ENCODE measurements at regions of chr16 and their contacts with region 1.

Region 1: DNA sequence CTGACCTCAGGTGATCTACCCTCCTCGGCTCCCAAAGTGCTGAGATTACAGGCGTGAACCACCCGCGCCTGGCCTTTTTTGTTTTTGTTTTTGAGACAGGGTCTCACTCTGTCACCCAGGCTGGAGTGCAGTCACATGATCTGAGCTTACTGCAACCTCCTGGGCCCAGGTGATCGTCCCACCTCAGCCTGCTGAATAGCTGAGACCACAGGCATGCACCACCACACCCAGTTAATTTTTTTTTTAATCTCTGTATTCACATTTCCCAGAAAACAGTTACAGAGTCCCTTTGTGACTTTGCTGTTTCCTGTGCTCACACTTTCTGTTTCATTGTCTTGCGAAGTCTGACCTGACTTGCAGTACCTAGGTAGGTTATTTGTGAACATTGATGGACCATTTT is 2.7 kb downstream of the CLUAP1 start:
- DNase-seq: peak; percentile 65
- H3K4me3 Mint-ChIP-seq: peak overlapping the region; percentile 77
- H3K27ac Mint-ChIP-seq: peak overlapping the region; percentile 90
- H3K4me1 Mint-ChIP-seq: peaks cover 68% of the 10 kb centered on the region
- H3K27me3 Mint-ChIP-seq: peaks cover 3% of the 10 kb centered on the region

Region 2: GRCh38 chr16:3282730-3283524 is 220.6 kb before region 1 on chr16 and contains the start of gene ZNF263:
- intact Hi-C with region 1: loop called (anchors 1 kb)
- DNase-seq: peak; percentile 90
- H3K4me3 Mint-ChIP-seq: peak within 1 kb of the TSS; percentile 96
- H3K27ac Mint-ChIP-seq: peak within 1 kb of the TSS; percentile 97
- H3K4me1 Mint-ChIP-seq: peaks cover 23% of the 10 kb centered on the region
- H3K27me3 Mint-ChIP-seq: no peaks in the 10 kb centered on the region
- total RNA-seq, gene ZNF263: 25.5 and 27.8 TPM in 2 replicates

Region 3: DNA sequence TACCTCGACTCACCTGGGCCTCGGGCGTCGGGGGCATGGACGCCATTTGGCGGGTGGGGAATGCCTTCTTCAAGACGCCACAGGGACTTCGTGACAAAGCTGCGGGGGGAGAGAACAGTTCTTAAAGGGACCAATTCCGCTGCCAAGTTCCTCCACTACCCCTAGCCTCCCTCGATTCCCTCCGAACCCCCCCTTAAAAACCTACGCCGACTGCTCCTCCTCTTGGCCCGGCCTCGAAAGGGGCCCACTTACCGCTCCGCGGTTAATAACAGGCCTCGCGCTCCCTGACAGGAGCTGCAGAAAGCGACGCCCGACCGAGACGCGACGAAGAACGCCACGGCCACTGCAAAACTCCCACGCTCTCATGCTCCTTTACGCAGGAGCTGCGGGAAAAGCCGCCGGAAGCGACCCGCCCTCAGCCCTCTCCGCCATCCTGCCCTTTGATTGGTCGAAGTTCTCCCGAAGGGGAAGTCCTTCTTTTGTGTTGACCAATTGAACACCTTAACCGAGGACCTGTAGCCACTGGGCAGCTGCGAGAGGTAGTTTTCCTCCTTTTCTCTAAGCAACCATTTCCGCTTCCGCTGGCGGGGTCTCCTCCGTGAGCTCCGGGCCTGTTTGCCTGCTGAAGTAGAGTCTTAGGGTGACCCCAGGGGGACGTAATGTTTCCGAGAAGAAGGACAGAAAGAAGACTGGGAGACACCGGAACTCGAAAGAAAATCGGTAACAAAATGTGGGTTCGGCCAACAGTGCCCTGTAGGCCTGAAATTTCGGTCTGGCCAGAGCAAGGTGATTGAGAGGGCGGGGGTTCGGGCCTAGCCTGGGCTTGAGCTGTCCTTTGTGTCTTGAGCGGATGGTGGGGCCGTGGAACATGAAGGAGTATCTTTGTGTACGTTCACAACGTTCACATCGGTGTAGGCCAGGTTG is 60.2 kb before region 1 on chr16 and contains the starts of genes NAA60 and ZNF597:
- intact Hi-C with region 1: loop called (anchors 1 kb)
- DNase-seq: peak; percentile 79
- H3K4me3 Mint-ChIP-seq: peak within 1 kb of the TSS; percentile 99
- H3K27ac Mint-ChIP-seq: peak within 1 kb of the TSS; percentile 98
- H3K4me1 Mint-ChIP-seq: peaks cover 15% of the 10 kb centered on the region
- H3K27me3 Mint-ChIP-seq: no peaks in the 10 kb centered on the region
- total RNA-seq, gene NAA60: 35.4 and 38.3 TPM in 2 replicates
- total RNA-seq, gene ZNF597: 2.6 TPM in 2 replicates

Region 4: DNA sequence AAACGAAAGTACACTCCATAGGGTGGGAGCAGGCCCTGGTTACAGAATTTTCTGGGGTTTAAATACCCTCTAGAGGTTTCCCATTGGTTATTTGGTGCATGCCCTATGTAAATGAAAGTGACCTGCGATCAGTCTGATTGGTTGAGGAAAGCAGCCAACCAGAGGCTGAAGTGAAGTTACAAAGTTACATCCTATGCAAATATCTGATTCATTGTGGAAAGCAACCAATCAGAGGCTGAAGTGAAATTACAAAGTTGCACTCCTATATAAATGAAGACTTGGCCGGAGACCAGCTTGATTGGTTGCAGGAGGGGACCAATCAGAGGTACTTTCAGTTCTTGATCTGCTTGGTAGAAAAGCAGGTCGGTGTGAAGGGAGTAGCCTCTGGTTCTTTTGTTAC is 35.6 kb before region 1 on chr16:
- intact Hi-C with region 1: no loop called
- DNase-seq: no peak
- H3K4me3 Mint-ChIP-seq: no peak overlapping the region
- H3K27ac Mint-ChIP-seq: no peak overlapping the region
- H3K4me1 Mint-ChIP-seq: peaks cover 19% of the 10 kb centered on the region
- H3K27me3 Mint-ChIP-seq: no peaks in the 10 kb centered on the region

Region 5: DNA sequence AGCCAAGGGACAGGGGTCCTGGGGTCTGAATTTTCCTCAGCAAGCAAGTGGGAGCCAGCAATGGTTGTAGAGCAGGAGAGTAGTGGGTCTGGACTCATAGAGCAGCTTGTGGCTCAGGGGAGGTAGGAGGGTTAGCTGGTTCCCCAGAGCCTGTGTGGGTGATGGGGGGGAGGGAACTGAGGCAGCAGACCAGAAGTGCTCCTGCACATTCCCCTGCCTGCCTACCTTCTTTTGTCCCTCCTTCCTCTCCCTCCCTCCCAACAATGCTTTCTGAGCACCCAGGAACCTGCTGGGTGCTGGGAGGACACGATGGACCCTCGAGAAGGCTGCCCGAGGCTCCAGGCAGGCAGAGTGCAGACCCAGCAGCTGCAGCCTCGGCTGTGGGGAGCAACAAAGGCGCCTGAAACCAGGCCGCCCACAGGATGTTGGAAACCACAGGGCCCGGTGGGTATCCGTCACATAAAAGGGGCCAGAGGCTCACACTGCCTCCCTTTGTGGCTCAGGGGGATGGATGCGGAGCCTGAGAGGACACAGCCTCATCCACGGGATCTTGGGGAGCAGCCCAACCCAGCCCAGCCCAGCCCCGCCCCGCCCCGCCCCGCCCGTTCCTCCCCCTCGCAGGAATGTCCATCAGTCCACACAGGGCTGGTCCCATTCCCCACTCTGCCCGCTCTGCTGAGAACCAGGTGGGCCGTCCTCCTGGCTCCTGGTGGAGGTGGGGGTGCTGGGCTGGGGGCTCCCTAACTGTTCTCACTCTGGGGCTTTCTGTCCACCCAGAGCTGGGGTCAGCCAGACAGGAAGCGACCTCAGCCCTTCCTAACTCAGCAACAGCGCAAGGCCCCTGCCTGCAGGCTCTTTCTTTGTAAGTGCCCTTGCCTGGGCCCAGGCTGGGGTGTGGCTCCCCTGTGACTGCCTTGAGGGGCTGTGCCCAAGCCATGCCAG is 75.4 kb after region 1 on chr16:
- intact Hi-C with region 1: loop called (anchors 2 kb)
- DNase-seq: peak; percentile 65
- H3K4me3 Mint-ChIP-seq: peak overlapping the region; percentile 96
- H3K27ac Mint-ChIP-seq: peak overlapping the region; percentile 93
- H3K4me1 Mint-ChIP-seq: peaks cover 52% of the 10 kb centered on the region
- H3K27me3 Mint-ChIP-seq: no peaks in the 10 kb centered on the region